ENCODE measurements at regions of chr13 and their contacts with region 1.

Region 1: DNA sequence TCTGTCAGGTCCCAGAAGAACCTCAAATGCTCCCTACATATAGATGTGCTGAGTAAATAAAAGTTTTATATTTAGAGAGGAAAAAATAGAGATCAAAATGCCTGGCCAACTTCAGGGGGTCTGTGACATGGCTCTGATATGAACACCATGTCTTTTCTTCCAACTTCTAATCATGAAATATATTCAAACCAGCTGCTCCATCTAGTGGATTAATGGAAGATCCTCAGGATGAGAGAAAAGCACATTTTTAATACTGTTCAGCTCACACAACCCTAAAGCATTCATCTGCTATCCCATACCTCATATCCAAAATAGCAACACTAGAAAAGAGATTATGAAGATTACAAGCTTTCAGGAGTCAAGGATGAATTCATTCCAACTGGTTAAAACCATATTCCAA is 56.0 kb upstream of the DOCK9 start:
- DNase-seq: no peak
- ATAC-seq: peak; percentile 85

Region 2: GRCh38 chr13:98890186-98890585 is 143.6 kb before region 1 on chr13:
- intact Hi-C with region 1: loop called (anchors 10 kb)
- DNase-seq: no peak
- ATAC-seq: peak; percentile 52

Region 3: DNA sequence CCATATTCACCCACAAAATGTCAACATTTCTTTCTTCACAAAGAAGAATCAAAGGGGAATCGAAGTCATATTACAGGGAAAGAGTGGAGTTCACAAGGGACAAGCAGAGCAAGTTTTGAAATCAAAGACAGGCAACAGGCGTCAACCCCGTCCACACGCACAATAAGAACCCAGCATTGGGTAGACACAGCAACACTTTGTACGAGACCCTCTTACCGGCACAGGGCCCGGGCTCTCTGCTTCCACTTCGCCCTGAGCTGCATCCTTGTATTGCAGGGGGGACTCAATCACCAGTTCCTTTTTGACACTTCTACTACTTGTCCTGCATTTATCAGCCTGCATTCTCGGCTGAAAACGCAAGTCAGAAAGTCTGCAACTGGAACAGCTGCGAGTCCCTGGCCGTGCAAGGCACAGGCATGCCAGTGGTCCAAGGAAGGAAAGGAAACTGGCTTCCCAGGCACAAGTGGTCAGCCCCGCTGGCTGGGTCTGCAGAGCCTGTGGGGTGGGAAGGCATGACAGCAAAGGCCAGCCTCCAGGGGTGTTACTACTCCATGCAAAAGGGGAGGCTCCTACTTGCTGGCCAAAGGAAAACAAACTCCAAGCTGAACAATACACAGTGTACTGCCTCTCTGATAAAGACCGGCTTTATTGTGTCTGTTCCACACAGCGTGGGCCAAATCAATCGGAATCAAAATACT is 56.1 kb before region 1 on chr13 and contains the start of gene DOCK9:
- intact Hi-C with region 1: loop called (anchors 10 kb)
- DNase-seq: peak; percentile 83
- ATAC-seq: peak; percentile 92
- total RNA-seq, gene DOCK9: 28.3 TPM

Measured in Right ventricle myocardium superior (tissue), 1 donor.